ENCODE measurements at regions of chr1 and their contacts with region 1.

Region 1: DNA sequence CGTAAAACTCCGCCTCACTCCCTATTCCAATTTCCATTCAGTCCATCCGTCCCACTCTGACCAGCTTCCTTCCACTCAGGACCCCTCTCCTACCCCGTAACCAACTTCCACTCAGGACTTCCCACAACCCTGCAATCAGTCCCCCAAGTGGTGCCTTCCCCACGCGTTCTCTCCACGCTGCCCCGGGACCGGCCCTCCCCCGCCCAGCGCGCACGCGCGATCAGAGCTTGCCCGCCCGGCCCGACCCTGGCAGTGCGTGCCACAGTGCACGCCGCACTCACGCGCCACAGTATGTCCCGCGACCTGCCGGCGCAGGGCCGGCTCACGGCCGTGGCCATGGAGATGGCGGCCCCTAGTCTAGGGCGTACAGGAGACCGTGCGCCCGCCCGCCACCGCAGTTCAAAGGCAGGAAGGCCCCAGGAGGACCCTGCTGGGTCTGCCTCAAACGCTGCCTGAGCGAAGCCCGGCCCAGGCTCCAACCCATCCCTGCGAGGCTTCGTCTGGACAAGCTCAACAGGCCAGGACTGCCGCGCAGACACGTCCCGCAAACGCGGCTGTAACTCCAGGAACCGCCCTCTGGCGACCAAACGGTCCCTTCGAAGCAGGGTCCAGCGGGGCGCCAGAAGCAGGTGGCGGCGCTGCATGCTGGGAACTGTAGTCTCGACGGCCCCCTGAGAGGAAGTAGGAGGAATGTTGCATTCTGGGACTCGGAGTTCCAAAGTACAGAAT is at the start of gene NDC1:
- DNase-seq: peak; percentile 96
- ATAC-seq: peak; percentile 95
- H3K4me3 ChIP-seq: peak within 1 kb of the TSS; percentile 98
- H3K27ac ChIP-seq: peak within 1 kb of the TSS; percentile 98
- H3K4me1 ChIP-seq: peaks cover 7% of the 10 kb centered on the region
- H3K27me3 ChIP-seq: no peaks in the 10 kb centered on the region
- CTCF ChIP-seq: 0 out of 2 replicates have a peak, but pooled peaks have one; percentile 18
- POLR2A ChIP-seq: no peak
- RAD21 ChIP-seq: no peak
- total RNA-seq, gene NDC1: 33.9 and 45.3 TPM in 2 replicates

Region 2: GRCh38 chr1:53765657-53766056 is 72.4 kb before region 1 on chr1:
- CTCF ChIA-PET with region 1: no interaction called
- POLR2A ChIA-PET with region 1: interaction called, 15 read pairs
- dilution Hi-C with region 1: no loop called
- in situ Hi-C with region 1: no loop called
- intact Hi-C with region 1: no loop called
- DNase-seq: peak; percentile 72
- ATAC-seq: peak; percentile 79
- H3K4me3 ChIP-seq: no peak overlapping the region
- H3K27ac ChIP-seq: no peak overlapping the region
- H3K4me1 ChIP-seq: peaks cover 8% of the 10 kb centered on the region; the same call in 1 of the 2 replicates
- H3K27me3 ChIP-seq: no peaks in the 10 kb centered on the region
- CTCF ChIP-seq: no peak
- POLR2A ChIP-seq: no peak
- RAD21 ChIP-seq: no peak

Measured in IMR-90 (cell line).